ENCODE measurements at regions of chr7 and their contacts with region 1.

Region 1: DNA sequence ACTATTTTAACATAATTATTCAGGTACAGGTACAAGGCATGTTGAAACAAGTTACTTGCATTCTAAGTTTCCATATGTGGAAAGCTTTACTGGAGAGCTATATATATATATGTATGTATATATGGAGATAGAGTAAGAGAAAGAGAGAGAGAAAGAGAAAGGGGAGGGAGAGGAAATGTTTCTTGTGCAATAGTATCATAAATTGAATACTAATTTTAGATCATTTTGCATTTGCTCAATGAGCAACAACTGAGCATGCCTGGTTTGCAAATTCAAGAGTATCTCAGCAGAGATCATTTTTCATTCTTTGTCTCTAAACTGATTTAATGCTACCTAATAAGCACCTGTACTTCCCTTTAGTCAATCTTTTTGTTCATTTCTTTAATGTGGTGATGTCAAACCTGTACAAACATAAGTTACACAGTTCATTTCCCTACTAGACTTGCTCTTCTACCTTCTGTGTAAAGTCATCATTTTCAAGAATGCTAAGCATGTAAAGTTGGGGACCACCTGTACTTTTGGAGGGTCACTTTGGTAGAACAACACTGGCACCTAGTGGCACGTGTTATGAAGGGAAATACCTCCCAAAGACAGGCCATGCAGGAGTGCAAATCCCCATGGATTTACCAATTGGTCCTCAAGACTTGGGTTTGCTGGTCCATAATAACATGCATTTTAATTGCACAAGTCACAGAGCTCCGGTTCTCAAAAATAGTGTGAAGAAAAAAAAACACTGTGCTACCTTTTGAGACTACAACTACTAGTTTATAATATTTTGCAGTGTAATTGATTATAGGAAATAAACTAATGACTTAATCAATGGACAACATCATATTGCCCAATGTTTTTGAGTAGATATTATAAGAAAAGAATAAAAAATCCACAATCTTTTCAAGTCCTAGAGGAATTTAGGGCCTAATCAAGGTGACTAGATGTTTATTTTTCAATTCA is 431.2 kb upstream of the IGFBP3 start:
- DNase-seq: peak; percentile 81 to 88
- H3K4me3 ChIP-seq: no peak overlapping the region
- H3K27ac ChIP-seq: peak overlapping the region; percentile 14; the same call in 1 of the 2 replicates
- H3K4me1 ChIP-seq: peaks cover 8% of the 10 kb centered on the region
- H3K27me3 ChIP-seq: no peaks in the 10 kb centered on the region
- CTCF ChIP-seq: peak; percentile 97

Region 2: DNA sequence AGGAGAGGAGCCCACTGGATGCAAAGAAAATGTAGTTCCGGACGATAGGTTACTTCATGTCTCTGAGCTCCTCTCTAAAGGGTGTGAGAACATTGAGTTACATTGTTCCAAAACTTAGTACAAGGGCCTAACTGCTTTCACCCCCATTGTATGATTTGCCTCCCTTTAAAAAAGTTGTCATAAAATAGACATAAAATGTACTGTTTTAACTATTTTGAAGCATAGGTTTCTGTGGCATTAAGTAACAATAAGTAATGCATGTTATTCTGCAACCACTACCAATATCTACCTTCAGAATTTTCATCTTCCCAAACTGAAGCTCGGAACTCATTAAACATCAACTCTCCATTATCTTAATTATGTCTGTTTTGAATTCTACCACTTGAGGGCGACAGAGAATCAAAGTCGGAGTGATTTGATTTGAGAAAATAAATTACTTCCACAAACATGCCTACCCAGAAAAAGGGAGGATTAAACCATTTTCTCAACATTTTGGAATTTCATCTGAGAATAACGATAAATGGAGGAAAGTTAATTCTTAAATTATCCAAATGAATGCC is 461.3 kb before region 1 on chr7:
- CTCF ChIA-PET with region 1: no interaction called
- POLR2A ChIA-PET with region 1: no interaction called
- intact Hi-C with region 1: loop called (anchors 1 kb)
- DNase-seq: peak in 1 of 2 experiments; percentile 50
- H3K4me3 ChIP-seq: no peak overlapping the region
- H3K27ac ChIP-seq: no peak overlapping the region
- H3K4me1 ChIP-seq: peaks cover 30% of the 10 kb centered on the region
- H3K27me3 ChIP-seq: no peaks in the 10 kb centered on the region
- CTCF ChIP-seq: peak; percentile 98

Region 3: GRCh38 chr7:46058086-46058823 is 294.0 kb before region 1 on chr7:
- CTCF ChIA-PET with region 1: no interaction called
- POLR2A ChIA-PET with region 1: no interaction called
- intact Hi-C with region 1: no loop called
- DNase-seq: no peak
- H3K4me3 ChIP-seq: no peak overlapping the region
- H3K27ac ChIP-seq: no peak overlapping the region
- H3K4me1 ChIP-seq: no peaks in the 10 kb centered on the region
- H3K27me3 ChIP-seq: no peaks in the 10 kb centered on the region
- CTCF ChIP-seq: no peak

Region 4: DNA sequence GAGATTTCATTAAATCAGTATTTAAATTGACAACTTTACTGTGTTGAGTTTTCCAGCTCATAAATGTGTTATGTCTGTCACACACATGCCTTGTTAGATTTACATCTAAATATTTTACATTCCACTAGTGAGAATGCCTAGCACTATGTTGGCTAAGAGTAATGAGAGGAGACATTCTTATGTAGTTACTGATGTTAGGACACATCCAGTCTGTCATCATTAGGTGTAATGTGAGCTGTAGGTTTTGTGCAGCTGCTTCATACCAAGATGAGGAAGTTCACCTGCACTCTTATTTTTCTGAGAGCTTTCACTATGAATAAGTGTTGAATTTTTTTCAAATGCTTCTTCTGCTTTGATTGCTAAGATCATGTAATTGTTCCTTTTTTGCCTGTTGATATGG is 213.2 kb before region 1 on chr7:
- CTCF ChIA-PET with region 1: no interaction called
- POLR2A ChIA-PET with region 1: no interaction called
- intact Hi-C with region 1: loop called (anchors 1 kb)
- DNase-seq: peak; percentile 40 to 100
- H3K4me3 ChIP-seq: no peak overlapping the region
- H3K27ac ChIP-seq: peak overlapping the region; percentile 83
- H3K4me1 ChIP-seq: peaks cover 29% of the 10 kb centered on the region
- H3K27me3 ChIP-seq: no peaks in the 10 kb centered on the region
- CTCF ChIP-seq: no peak

Region 5: DNA sequence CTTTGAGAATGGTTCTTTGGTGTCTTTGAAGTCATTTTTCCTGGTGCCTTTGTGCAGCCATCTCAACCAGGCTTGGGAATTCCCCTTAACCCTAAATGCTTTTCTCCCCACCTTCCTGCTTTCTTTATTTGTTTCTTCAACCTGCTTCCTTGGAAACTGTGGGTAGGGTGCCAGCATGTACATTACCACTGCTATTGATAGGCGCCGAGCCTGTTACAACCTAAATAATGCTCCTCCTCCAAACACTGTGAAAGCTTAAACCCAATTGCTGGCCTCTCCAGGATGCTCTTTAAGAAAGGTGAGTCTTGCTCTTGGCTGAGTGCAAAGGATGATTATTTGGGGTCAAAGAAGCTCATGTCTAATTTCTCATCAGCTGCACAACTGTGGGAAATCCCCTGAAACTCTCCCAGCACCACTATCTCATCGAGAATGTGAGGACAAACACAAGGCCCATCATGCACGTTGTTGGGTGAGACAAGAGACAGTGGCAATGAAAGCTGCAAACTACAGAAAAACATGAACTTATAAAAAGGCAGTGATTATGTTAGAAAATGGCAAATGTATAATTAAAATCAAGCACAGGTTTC is 145.7 kb before region 1 on chr7:
- CTCF ChIA-PET with region 1: no interaction called
- POLR2A ChIA-PET with region 1: no interaction called
- intact Hi-C with region 1: loop called (anchors 1 kb)
- DNase-seq: peak; percentile 48 to 52
- H3K4me3 ChIP-seq: no peak overlapping the region
- H3K27ac ChIP-seq: peak overlapping the region; percentile 63; the same call in 1 of the 2 replicates
- H3K4me1 ChIP-seq: peaks cover 25% of the 10 kb centered on the region
- H3K27me3 ChIP-seq: no peaks in the 10 kb centered on the region
- CTCF ChIP-seq: no peak

Region 6: GRCh38 chr7:46544374-46545008 is 192.2 kb after region 1 on chr7:
- CTCF ChIA-PET with region 1: no interaction called
- POLR2A ChIA-PET with region 1: no interaction called
- intact Hi-C with region 1: loop called (anchors 2 kb)
- DNase-seq: peak; percentile 34 to 84
- H3K4me3 ChIP-seq: no peak overlapping the region
- H3K27ac ChIP-seq: peak overlapping the region; percentile 67
- H3K4me1 ChIP-seq: peaks cover 30% of the 10 kb centered on the region
- H3K27me3 ChIP-seq: no peaks in the 10 kb centered on the region
- CTCF ChIP-seq: no peak

Region 7: GRCh38 chr7:47254081-47255006 is 902.1 kb after region 1 on chr7:
- CTCF ChIA-PET with region 1: no interaction called
- POLR2A ChIA-PET with region 1: no interaction called
- intact Hi-C with region 1: loop called (anchors 1 kb)
- DNase-seq: peak; percentile 52 to 79
- H3K4me3 ChIP-seq: peak overlapping the region; percentile 63
- H3K27ac ChIP-seq: no peak overlapping the region
- H3K4me1 ChIP-seq: peaks cover 19% of the 10 kb centered on the region
- H3K27me3 ChIP-seq: no peaks in the 10 kb centered on the region
- CTCF ChIP-seq: peak; percentile 89